Calu3 (cell line): ENCODE measurements at regions of chr6 and their contacts with region 1.

Region 1: GRCh38 chr6:117602151-117602898 is at the start of gene GOPC:
- DNase-seq: peak; percentile 95
- H3K4me3 Mint-ChIP-seq: peak within 1 kb of the TSS; percentile 99
- H3K27ac Mint-ChIP-seq: peak within 1 kb of the TSS; percentile 98
- H3K4me1 Mint-ChIP-seq: peaks cover 19% of the 10 kb centered on the region
- H3K27me3 Mint-ChIP-seq: no peaks in the 10 kb centered on the region
- CTCF ChIP-seq: peak; percentile 30
- total RNA-seq, gene GOPC: 28.8 and 33.5 TPM in 2 replicates

Region 2: DNA sequence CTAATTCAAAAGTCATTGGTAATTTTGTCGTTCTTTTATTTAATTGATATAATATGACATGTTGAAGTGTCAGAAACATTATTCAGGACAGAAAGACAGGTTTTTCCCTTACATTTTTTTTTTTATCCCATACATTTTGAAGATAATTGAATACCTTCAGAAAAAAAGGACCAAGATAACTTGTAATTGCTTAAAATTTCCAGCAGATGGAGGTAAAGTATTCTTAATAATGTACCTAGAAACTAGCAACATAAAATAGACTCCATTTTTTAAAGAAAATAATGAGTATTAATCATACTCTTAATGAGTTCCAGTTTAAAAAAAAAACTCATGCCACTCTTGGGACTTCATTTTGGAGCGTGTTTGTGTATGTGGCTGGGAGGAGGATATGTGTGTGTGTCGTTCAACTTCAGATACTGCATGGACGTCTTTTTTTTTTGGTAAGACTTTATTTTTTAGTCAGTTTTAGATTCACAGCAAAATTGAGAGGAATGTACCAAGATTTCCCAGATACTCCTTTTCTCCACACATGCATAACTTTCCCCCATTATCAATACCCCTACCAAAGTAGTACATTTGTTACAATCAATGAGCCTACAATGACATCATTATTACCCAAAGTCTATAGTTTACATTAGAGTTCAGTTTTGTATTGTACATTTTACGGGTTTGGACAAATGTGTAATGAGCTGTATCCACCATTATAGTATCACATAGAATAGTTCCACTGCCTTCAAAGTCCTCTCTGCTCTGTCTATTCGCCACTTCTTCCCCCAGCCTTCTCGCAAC is 256.0 kb before region 1 on chr6:
- CTCF ChIA-PET with region 1: no interaction called
- intact Hi-C with region 1: loop called (anchors 1 kb)
- DNase-seq: no peak
- H3K4me3 Mint-ChIP-seq: no peak overlapping the region
- H3K27ac Mint-ChIP-seq: peak overlapping the region; percentile 8
- H3K4me1 Mint-ChIP-seq: no peaks in the 10 kb centered on the region
- H3K27me3 Mint-ChIP-seq: peaks cover 12% of the 10 kb centered on the region
- CTCF ChIP-seq: peak; percentile 56

Region 3: GRCh38 chr6:117399924-117400323 is 202.4 kb before region 1 on chr6:
- CTCF ChIA-PET with region 1: interaction called, 3 read pairs
- intact Hi-C with region 1: loop called (anchors 2 kb)
- DNase-seq: no peak
- H3K4me3 Mint-ChIP-seq: no peak overlapping the region
- H3K27ac Mint-ChIP-seq: no peak overlapping the region
- H3K4me1 Mint-ChIP-seq: no peaks in the 10 kb centered on the region
- H3K27me3 Mint-ChIP-seq: no peaks in the 10 kb centered on the region
- CTCF ChIP-seq: no peak

Region 4: DNA sequence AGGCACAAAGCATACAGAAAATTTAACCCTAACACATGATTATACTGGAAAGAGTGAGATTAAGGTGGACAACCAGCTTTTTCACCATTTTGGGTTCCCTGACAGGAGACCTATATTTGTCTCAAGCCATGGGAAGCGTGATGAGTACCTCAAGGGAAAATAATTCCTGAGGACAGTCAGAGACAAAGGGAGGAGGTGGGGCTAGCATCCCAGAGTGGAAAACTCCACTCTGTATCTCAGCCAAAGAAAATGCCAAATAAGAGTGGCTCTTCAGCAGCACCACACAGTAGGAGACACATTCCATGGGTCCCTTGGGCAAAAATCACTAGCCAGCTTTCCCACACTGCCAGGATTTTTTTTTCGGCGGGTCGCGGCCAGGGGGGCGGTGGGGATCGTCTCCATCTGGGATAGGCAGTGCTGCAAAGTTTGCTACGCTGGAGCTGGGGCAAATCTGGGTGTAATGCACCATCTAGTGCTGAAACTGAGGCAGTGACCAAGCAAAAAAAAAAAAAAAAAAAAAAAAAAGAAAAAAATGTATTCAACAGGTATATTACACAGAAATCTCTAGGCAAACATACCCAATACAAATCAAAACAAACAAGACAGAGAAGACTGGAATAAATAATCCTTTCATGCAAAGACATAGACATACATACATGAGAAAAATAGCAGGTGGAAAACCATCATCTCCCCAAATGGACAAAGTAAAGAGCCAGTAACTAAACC is 227.4 kb after region 1 on chr6:
- CTCF ChIA-PET with region 1: no interaction called
- intact Hi-C with region 1: loop called (anchors 5 kb)
- DNase-seq: peak; percentile 33
- H3K4me3 Mint-ChIP-seq: peak overlapping the region; percentile 55
- H3K27ac Mint-ChIP-seq: no peak overlapping the region
- H3K4me1 Mint-ChIP-seq: peaks cover 6% of the 10 kb centered on the region
- H3K27me3 Mint-ChIP-seq: no peaks in the 10 kb centered on the region
- CTCF ChIP-seq: no peak

Region 5: DNA sequence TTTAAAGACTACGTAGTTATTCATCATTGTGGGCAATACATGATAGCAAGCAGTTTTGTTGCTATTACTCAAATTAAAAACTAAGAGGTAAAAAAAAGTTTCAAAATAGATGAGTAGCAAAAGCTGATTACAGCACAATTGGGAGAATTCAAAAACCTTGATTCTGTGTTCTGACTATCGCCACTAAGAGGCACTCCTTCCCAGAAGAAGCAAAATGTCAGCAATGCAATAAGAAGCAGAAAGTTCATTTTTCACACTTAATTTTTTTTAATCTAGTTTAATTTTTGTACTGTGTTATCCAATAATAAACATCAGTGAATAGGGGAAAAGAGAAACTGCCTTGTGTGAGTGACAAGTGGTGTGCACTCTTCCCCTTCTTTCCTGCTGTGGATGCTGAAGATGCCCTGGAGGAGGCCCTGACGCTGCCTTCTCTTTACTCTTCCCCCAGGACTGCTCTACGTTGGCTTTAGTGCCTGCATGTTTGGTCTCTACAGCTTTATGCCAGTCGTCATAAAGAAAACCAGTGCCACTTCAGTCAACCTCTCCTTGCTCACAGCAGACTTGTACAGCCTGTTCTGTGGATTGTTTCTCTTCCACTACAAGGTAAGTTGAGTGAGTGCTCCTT is 682.5 kb after region 1 on chr6:
- CTCF ChIA-PET with region 1: no interaction called
- intact Hi-C with region 1: no loop called
- DNase-seq: no peak
- H3K4me3 Mint-ChIP-seq: no peak overlapping the region
- H3K27ac Mint-ChIP-seq: no peak overlapping the region
- H3K4me1 Mint-ChIP-seq: peaks cover 8% of the 10 kb centered on the region
- H3K27me3 Mint-ChIP-seq: no peaks in the 10 kb centered on the region
- CTCF ChIP-seq: no peak